ENCODE measurements at regions of chr1 and their contacts with region 1.

Region 1: DNA sequence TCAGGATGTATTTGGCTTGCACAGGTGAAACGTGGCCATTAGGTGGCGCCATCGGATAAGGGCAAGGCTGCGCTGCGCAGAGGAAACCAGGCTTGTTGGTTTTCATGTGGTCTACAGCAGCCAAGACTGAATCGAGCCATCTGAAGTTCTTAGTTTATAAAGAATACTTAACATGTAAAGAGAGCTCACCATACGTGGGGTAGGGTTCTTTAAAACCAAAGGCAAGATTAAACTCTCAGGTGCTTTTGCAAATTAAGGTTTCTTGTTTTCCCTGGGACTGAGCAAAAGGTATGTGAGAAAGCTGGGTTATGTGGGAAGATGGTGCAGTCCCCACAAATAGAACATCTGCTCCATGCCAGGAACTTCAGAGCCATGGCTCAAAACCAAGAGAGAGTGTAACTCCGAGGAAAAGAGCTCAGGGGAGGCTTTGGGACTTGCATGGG is 9.3 kb downstream of the MASP2 start:
- DNase-seq: peak; percentile 84
- ATAC-seq: peak; percentile 99
- H3K4me3 ChIP-seq: no peak overlapping the region
- H3K27ac ChIP-seq: no peak overlapping the region
- H3K4me1 ChIP-seq: no peaks in the 10 kb centered on the region
- H3K27me3 ChIP-seq: peaks cover 6% of the 10 kb centered on the region
- CTCF ChIP-seq: peak; percentile 99
- POLR2A ChIP-seq: 0 out of 2 replicates have a peak, but pooled peaks have one; percentile 47
- RAD21 ChIP-seq: peak; percentile 99

Region 2: DNA sequence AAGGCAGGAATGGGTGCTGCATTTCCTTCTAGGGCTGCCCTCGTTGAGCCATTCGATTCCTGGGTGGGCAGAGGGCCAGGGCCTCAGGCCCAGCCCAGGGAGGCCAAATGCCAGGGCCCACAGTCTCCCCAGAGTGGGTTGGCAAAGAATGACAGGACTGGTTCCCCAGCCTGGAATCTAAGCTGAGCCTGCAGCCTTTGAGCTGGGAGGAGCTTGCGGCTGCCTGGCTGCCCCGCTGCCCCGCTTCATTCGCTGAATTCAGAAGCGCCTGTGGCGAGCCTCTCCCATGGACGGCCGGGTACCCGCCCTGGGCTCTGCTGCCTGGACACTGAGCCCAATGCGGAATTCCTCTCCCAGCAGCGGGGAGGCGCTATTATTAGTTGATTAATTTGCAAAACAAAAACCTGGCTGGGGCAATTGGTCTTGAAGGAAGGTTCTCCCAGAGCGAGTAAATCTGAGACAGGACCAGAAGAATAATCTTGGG is 57.6 kb before region 1 on chr1:
- CTCF ChIA-PET with region 1: no interaction called
- POLR2A ChIA-PET with region 1: no interaction called
- dilution Hi-C with region 1: no loop called
- in situ Hi-C with region 1: no loop called
- intact Hi-C with region 1: no loop called
- DNase-seq: peak; percentile 31
- ATAC-seq: peak; percentile 88
- H3K4me3 ChIP-seq: no peak overlapping the region
- H3K27ac ChIP-seq: no peak overlapping the region
- H3K4me1 ChIP-seq: peaks cover 1% of the 10 kb centered on the region; the same call in 1 of the 2 replicates
- H3K27me3 ChIP-seq: peaks cover 14% of the 10 kb centered on the region
- CTCF ChIP-seq: peak; percentile 32; the same call in 1 of the 2 replicates
- POLR2A ChIP-seq: no peak
- RAD21 ChIP-seq: no peak

Region 3: DNA sequence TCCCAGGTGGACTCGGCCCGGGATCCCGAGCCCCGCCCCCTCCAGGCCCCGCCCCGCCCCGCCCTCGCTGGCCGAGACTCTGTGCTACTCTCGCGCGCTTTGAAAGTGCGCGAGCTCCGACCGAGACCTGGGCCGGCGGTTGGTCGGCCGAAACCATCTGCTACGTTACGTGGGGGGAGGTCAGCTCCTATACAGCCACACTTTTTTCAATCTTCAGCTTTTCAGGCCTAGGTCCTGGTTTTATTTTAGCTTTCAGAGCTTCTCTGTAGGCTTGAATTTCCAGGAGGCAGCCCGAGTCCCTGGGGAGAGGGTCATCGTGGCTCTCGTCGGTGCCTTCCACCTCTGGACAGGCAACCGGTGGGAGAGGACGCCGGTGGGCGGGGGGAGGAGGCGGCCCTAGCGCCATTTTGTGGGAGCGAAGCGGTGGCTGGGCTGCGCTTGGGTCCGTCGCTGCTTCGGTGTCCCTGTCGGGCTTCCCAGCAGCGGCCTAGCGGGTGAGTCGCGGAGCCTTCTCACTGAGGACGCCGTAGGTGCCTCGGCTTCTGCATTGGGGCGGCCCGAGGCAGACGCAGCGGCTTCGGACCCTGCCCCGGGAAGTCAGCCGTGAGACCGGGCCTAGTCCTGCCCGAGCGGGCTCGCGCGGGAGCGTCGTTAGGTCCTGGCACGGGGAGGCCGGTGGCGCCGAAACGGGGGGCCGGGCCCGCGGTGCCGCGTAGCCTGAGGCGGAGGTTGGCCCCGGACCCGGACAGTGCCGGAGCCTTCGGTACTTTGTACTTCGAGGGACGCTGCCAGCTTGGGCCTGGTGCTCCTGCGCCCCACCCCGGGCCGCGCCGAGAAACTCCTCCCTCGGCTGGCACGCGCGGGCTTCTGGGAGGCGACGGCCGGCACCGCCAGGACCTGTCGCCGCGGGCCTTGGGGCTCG is 25.2 kb before region 1 on chr1 and contains the start of gene TARDBP:
- CTCF ChIA-PET with region 1: no interaction called
- POLR2A ChIA-PET with region 1: no interaction called
- dilution Hi-C with region 1: no loop called
- in situ Hi-C with region 1: no loop called
- intact Hi-C with region 1: no loop called
- DNase-seq: peak; percentile 83
- ATAC-seq: peak; percentile 94
- H3K4me3 ChIP-seq: peak within 1 kb of the TSS; percentile 89
- H3K27ac ChIP-seq: peak within 1 kb of the TSS; percentile 99
- H3K4me1 ChIP-seq: peaks cover 2% of the 10 kb centered on the region; the same call in 1 of the 2 replicates
- H3K27me3 ChIP-seq: no peaks in the 10 kb centered on the region
- CTCF ChIP-seq: no peak
- POLR2A ChIP-seq: peak; percentile 96
- RAD21 ChIP-seq: no peak
- total RNA-seq, gene TARDBP: 36.7 and 98.0 TPM in 2 replicates

Region 4: GRCh38 chr1:11027316-11027715 is 10.4 kb before region 1 on chr1:
- CTCF ChIA-PET with region 1: interaction called, 13 read pairs
- POLR2A ChIA-PET with region 1: no interaction called
- dilution Hi-C with region 1: no loop called
- in situ Hi-C with region 1: no loop called
- intact Hi-C with region 1: no loop called
- DNase-seq: no peak
- ATAC-seq: no peak
- H3K4me3 ChIP-seq: no peak overlapping the region
- H3K27ac ChIP-seq: no peak overlapping the region
- H3K4me1 ChIP-seq: no peaks in the 10 kb centered on the region
- H3K27me3 ChIP-seq: no peaks in the 10 kb centered on the region
- CTCF ChIP-seq: no peak
- POLR2A ChIP-seq: no peak
- RAD21 ChIP-seq: no peak

Region 5: DNA sequence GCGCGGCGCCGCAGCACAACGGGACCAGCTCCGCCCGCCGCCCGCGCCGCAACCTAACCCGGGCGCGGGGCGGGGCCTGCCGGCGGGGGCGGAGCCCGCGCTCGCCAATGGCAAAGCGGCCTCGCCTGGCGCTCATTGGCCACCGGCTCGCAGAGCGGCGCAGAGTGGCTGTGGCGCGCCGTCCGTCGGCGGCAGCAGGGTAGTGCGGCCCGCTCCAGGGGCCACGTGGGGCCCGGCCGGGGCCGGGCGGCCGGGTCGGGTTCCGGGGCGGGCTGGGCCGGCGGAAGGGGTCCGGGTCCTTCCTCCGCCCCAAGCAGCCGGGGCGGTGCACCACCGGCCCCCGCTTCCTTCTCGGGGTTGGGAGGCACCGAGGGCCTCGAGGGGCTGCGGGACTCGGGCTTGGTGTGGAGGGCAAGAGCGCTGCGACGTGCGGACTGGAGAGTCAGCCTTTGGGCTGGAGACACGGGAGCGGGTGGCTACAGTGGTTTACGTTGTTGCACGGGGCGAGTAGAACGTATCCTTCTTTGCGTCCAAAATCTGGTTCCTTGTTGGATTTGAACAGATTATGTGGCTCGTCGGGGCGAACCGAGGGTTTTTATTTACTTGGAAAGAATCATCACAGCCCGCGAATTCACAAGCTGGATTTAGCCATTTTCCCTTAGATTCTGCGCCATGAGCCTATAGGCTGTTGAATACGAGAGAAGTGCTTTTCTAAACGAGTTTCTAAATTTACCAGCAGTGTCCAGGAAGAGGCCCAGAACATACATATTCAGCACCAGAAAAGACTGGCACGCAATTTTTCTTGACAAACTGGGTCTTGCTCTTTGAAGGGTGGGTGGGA is 22.4 kb after region 1 on chr1 and contains the start of gene SRM:
- CTCF ChIA-PET with region 1: interaction called, 9 read pairs
- POLR2A ChIA-PET with region 1: interaction called, 4 read pairs
- dilution Hi-C with region 1: no loop called
- in situ Hi-C with region 1: no loop called
- intact Hi-C with region 1: loop called (anchors 1 kb)
- DNase-seq: peak; percentile 87
- ATAC-seq: peak; percentile 98
- H3K4me3 ChIP-seq: peak within 1 kb of the TSS; percentile 93
- H3K27ac ChIP-seq: peak within 1 kb of the TSS; percentile 70
- H3K4me1 ChIP-seq: peaks cover 8% of the 10 kb centered on the region
- H3K27me3 ChIP-seq: no peaks in the 10 kb centered on the region
- CTCF ChIP-seq: peak; percentile 43
- POLR2A ChIP-seq: no peak
- RAD21 ChIP-seq: no peak
- total RNA-seq, gene SRM: 23.1 and 25.6 TPM in 2 replicates

Region 6: DNA sequence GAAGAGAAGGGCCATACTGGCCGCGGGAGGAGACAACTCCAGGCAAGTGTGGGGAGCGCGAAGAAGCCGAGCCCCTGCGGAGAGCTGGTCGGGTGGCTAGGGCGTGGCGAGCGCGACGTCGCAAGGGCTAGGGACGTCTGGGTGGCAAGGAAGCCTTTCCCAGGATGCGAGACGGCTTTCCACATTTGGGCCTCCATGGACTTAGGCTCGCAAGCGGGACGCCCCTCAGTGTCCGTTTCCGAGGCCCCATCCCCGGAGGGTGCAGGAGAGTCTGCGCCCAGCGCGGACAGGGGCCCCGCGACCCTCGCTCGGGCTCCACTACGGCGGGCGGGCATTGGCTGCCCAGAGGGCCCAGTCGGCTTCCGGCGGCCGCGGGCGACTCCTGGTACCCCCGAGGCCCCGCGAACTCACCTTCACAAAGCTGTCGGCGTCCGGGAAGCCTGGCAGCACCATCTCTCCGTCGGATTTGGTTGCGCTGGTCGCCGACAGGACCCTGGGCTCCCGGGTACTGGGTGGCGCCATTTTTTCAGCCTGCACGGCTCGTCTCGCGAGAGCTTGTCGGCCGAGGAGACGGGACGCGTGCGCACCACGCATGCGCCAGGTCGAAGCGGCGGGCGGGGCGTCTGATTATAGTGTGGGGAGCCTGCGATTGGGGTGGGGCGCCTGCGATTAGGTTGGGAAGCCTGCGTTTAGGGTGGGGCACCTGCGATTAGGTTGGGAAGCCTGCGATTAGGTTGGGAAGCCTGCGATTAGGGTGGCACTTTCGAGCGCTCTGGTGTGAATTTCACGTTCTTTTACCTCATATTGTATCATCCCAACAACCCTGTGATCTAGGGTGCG is 61.8 kb after region 1 on chr1 and contains the start of gene EXOSC10:
- CTCF ChIA-PET with region 1: interaction called, 13 read pairs
- POLR2A ChIA-PET with region 1: no interaction called
- dilution Hi-C with region 1: no loop called
- in situ Hi-C with region 1: no loop called
- intact Hi-C with region 1: no loop called
- DNase-seq: peak; percentile 77
- ATAC-seq: peak; percentile 99
- H3K4me3 ChIP-seq: peak within 1 kb of the TSS; percentile 81
- H3K27ac ChIP-seq: peak within 1 kb of the TSS; percentile 85
- H3K4me1 ChIP-seq: 0 out of 2 replicates have a peak, but pooled peaks cover 2% of the 10 kb centered on the region
- H3K27me3 ChIP-seq: no peaks in the 10 kb centered on the region
- CTCF ChIP-seq: no peak
- POLR2A ChIP-seq: peak; percentile 67; the same call in 1 of the 2 replicates
- RAD21 ChIP-seq: no peak
- total RNA-seq, gene EXOSC10: 56.4 and 64.5 TPM in 2 replicates

Region 7: DNA sequence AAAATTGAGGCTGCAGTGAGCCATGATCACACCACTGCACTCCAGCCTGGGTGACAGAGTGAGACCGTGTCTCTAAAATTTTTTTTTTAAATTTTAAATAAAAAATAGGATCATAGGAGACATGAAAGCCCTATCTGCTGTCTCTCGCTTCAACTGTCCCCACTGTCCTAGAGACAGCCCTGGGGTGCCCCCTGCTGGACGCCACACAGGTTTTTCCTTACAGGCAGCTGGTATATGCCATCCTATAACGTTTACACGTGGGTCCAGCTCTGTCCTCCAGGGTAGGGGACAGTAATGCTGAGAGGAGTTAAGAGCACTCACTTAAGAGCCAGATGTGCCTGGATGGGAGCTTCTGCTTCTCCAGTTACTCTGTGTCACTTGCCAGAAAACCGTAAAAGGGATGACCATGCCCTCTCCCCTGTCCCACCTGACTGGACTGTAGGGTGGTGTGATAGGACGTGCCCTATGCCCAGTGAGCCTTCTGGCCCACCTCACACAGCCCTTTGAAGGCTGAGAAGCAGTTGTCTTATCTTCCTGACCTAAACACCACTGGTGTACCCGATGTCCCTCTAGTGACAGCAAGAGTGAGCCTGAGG is 608.0 kb after region 1 on chr1:
- CTCF ChIA-PET with region 1: interaction called, 12 read pairs
- POLR2A ChIA-PET with region 1: no interaction called
- dilution Hi-C with region 1: no loop called
- in situ Hi-C with region 1: loop called (anchors 10 kb)
- intact Hi-C with region 1: loop called (anchors 1 kb)
- DNase-seq: peak; percentile 60
- ATAC-seq: peak; percentile 74
- H3K4me3 ChIP-seq: no peak overlapping the region
- H3K27ac ChIP-seq: no peak overlapping the region
- H3K4me1 ChIP-seq: no peaks in the 10 kb centered on the region; the same call in 1 of the 2 replicates
- H3K27me3 ChIP-seq: peaks cover 19% of the 10 kb centered on the region
- CTCF ChIP-seq: peak; percentile 74
- POLR2A ChIP-seq: no peak
- RAD21 ChIP-seq: peak; percentile 73

Region 8: GRCh38 chr1:11719313-11720032 is 681.7 kb after region 1 on chr1:
- CTCF ChIA-PET with region 1: interaction called, 4 read pairs
- POLR2A ChIA-PET with region 1: no interaction called
- dilution Hi-C with region 1: no loop called
- in situ Hi-C with region 1: no loop called
- intact Hi-C with region 1: loop called (anchors 5 kb)
- DNase-seq: peak; percentile 61
- ATAC-seq: peak; percentile 93
- H3K4me3 ChIP-seq: no peak overlapping the region
- H3K27ac ChIP-seq: no peak overlapping the region
- H3K4me1 ChIP-seq: no peaks in the 10 kb centered on the region
- H3K27me3 ChIP-seq: peaks cover 22% of the 10 kb centered on the region
- CTCF ChIP-seq: peak; percentile 87
- POLR2A ChIP-seq: no peak
- RAD21 ChIP-seq: peak; percentile 90

Region 9: DNA sequence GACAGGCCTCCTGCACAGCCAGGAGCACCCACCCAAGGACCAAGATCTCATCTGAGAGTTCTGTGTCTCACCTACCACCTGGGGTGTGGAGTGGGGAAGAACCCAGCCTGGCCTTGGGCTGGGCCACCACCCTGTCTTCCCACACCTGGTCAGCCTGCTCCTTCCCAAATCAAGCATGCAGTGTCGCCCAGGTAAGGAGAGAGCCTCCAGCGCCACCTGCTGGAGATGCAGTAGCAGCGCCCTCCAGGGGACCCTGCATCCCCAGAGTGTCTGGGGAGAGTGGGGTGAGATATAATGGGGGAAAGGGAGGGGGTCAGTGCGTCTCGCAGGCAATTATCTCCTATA is 856.1 kb after region 1 on chr1:
- CTCF ChIA-PET with region 1: no interaction called
- POLR2A ChIA-PET with region 1: no interaction called
- dilution Hi-C with region 1: no loop called
- in situ Hi-C with region 1: no loop called
- intact Hi-C with region 1: loop called (anchors 5 kb)
- DNase-seq: peak; percentile 15
- ATAC-seq: peak; percentile 92
- H3K4me3 ChIP-seq: no peak overlapping the region
- H3K27ac ChIP-seq: no peak overlapping the region
- H3K4me1 ChIP-seq: no peaks in the 10 kb centered on the region
- H3K27me3 ChIP-seq: peaks cover 41% of the 10 kb centered on the region
- CTCF ChIP-seq: peak; percentile 72
- POLR2A ChIP-seq: no peak
- RAD21 ChIP-seq: peak; percentile 71

Measured in IMR-90 (cell line).